ENCODE measurements at regions of chr6 and their contacts with region 1.

Region 1: GRCh38 chr6:155418017-155418761 is 37.5 kb downstream of the NOX3 start:
- DNase-seq: peak; percentile 85
- H3K4me3 Mint-ChIP-seq: peak overlapping the region; percentile 82
- H3K27ac Mint-ChIP-seq: peak overlapping the region; percentile 100
- H3K4me1 Mint-ChIP-seq: peaks cover 37% of the 10 kb centered on the region
- H3K27me3 Mint-ChIP-seq: no peaks in the 10 kb centered on the region

Region 2: DNA sequence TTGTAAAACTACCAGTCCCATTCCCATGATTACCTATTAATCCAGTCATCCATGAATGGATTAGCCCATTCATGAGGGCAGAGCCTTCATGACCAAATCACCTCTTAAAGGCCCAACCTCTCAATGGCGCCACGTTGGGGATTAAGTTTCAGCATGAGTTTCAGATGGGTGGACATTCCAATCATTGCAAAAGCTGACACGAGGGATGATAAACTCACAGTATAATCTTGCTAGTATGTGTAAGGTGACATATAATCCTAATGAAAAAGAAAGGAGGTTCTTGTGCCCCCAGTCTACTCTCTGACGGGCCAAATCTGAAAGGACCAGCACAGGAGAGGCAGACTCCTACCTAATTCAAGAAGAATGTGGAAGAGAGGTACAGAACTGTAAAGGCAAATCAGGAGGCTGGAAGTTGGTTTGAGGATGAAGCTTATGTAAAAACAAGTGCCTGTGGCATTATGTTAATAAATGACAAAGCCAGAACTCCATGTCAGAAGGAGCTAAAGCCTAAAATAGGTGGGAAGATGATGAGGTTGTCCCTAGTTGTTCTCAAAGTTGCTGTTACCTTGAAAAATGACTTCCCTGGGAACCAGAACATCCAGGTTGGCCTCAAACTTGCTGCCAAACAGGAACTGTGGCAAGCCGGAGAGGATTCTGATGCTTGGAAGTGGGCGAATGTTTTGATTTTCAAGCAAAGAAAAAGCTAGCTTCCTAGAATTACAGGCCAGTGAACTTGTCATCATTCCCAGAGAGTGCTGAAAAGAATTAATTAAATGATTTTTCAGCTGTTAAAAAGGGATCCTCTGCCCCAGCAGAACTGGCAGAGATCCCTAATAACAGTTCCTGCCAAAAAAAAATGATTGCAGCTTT is 529.5 kb before region 1 on chr6:
- intact Hi-C with region 1: no loop called
- DNase-seq: no peak
- H3K4me3 Mint-ChIP-seq: no peak overlapping the region
- H3K27ac Mint-ChIP-seq: no peak overlapping the region
- H3K4me1 Mint-ChIP-seq: no peaks in the 10 kb centered on the region
- H3K27me3 Mint-ChIP-seq: no peaks in the 10 kb centered on the region

Region 3: DNA sequence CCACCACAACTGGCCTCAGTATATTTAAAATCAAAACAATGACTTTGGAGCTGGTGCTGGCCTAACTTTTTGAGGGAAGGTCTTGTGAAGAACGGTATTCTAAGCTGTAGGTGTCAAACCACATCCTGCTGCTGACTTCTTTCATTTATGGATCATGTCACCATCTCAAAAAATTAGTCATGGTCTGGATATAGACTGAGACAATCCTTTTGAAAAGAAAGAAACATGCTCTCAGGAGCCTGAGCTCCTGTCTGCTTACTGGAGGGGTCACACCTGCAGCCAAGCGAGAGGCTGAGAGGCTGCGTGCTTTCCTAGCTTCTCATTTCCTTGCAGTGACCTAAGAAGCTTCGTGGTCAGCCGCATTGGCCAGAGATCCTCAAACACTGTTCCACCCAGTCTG is 367.9 kb before region 1 on chr6:
- intact Hi-C with region 1: loop called (anchors 1 kb)
- DNase-seq: peak; percentile 82
- H3K4me3 Mint-ChIP-seq: peak overlapping the region; percentile 65
- H3K27ac Mint-ChIP-seq: peak overlapping the region; percentile 95
- H3K4me1 Mint-ChIP-seq: peaks cover 36% of the 10 kb centered on the region
- H3K27me3 Mint-ChIP-seq: no peaks in the 10 kb centered on the region

Region 4: DNA sequence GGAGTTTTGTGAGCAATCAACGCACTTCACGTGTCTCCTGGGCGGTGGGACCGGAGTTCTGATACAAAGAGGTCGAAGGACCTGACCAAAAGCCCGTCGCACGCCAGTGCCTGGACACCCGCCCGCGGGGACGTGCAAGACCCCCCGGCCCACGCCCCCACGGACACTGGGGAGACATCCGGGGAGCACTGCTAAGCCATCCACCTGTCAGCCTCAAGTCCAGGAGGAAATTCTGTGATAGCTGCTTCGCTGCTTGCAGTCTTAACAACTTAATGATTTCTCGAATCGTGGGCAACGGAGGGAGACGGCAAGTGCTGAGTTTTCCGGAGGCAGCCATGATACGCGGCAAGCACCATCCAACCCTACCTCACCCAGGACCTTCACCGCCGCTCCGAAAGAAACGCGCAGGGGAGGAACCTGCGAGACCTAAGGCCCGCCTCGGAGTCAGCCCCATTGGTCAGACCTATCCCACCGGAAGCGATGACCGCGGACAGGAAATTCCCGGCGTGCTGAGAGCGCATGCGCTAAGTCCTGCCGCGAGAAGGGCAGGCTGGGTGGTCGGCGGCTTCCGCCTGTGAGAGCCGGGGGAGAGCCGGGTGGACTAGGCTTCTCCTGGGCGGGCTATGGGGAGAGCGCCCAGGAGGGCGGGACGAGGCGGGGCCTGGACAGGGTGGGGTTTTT is 104.0 kb before region 1 on chr6 and contains the start of gene TFB1M:
- intact Hi-C with region 1: loop called (anchors 1 kb)
- DNase-seq: peak; percentile 100
- H3K4me3 Mint-ChIP-seq: peak within 1 kb of the TSS; percentile 99
- H3K27ac Mint-ChIP-seq: peak within 1 kb of the TSS; percentile 98
- H3K4me1 Mint-ChIP-seq: peaks cover 27% of the 10 kb centered on the region
- H3K27me3 Mint-ChIP-seq: peaks cover 2% of the 10 kb centered on the region
- total RNA-seq, gene TFB1M: 36.8 and 41.4 TPM in 2 replicates

Region 5: DNA sequence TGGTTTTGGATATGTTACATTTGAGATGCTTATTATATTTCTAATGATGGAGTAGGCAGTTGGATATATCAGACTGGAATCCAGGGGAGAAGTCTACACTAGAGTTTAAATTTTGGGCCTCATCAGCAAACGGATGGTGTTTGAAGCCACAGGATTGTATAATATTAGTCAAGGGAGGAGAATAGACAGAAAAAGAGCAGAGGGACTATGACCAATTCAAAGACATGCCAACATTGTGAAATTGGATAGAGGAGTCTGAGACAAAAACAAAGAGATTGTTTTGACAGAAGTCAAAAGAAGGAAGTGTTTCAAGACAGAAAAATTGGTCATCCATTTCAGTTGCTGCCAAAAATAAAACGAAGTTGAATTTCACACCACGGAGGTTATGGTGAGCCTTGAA is 29.1 kb before region 1 on chr6:
- intact Hi-C with region 1: no loop called
- DNase-seq: no peak
- H3K4me3 Mint-ChIP-seq: no peak overlapping the region
- H3K27ac Mint-ChIP-seq: no peak overlapping the region
- H3K4me1 Mint-ChIP-seq: no peaks in the 10 kb centered on the region
- H3K27me3 Mint-ChIP-seq: peaks cover 3% of the 10 kb centered on the region

Region 6: GRCh38 chr6:155436981-155437749 is 19.0 kb after region 1 on chr6:
- intact Hi-C with region 1: loop called (anchors 2 kb)
- DNase-seq: no peak
- H3K4me3 Mint-ChIP-seq: no peak overlapping the region
- H3K27ac Mint-ChIP-seq: no peak overlapping the region
- H3K4me1 Mint-ChIP-seq: peaks cover 6% of the 10 kb centered on the region
- H3K27me3 Mint-ChIP-seq: no peaks in the 10 kb centered on the region

Region 7: GRCh38 chr6:155493694-155494143 is 75.5 kb after region 1 on chr6:
- intact Hi-C with region 1: loop called (anchors 1 kb)
- DNase-seq: no peak
- H3K4me3 Mint-ChIP-seq: no peak overlapping the region
- H3K27ac Mint-ChIP-seq: peak overlapping the region; percentile 2
- H3K4me1 Mint-ChIP-seq: peaks cover 7% of the 10 kb centered on the region
- H3K27me3 Mint-ChIP-seq: no peaks in the 10 kb centered on the region

Region 8: GRCh38 chr6:155628306-155628705 is 210.1 kb after region 1 on chr6:
- intact Hi-C with region 1: loop called (anchors 1 kb)
- DNase-seq: peak; percentile 60
- H3K4me3 Mint-ChIP-seq: peak overlapping the region; percentile 2
- H3K27ac Mint-ChIP-seq: peak overlapping the region; percentile 81
- H3K4me1 Mint-ChIP-seq: peaks cover 2% of the 10 kb centered on the region
- H3K27me3 Mint-ChIP-seq: no peaks in the 10 kb centered on the region